ENCODE measurements at regions of chr12 and their contacts with region 1.

Region 1: DNA sequence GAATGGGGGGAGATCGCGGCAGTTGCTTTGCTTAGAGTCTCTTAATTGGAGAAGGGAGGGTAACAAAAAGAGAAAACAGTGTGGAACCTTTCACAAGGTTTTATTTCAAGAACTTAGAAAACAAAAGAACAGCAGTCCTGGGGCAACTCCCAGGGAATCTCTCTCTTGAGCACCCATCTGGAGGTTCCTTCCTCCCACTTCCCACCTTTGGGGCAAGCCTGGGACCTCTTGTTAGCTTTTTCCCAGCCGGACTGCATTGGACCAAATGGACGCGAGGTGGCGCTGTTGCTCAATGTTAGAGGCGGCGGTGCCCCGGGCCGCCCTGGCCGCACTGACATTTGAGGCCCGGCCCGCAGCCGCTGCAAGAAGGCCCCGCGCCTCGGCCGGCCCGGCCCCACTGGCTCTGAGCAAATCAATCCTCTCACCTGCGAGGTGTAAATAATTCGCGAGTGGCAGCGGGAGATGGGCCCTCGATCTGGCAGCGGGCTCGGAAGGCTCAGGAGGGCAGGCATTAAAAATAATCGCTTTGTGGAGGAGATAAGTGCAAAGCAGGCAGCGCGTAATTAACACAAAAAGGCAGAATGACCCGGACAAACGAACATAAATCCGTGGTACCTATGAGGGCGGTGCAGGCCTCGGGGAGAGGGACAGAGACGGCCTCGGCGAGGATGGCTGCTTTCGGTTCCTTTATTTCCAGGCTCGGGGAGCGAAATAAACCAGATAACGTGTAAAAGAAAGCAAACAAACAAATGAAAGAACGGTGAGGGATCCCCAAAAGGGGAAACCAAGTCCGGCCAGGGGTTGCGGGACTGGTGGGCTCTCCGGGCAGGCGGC is 2.7 kb upstream of the HOXC8 start:
- DNase-seq: peak; percentile 65
- H3K4me3 ChIP-seq: no peak overlapping the region
- H3K27ac ChIP-seq: no peak overlapping the region
- H3K27me3 ChIP-seq: peaks cover 92% of the 10 kb centered on the region
- CTCF ChIP-seq: peak; percentile 84

Region 2: GRCh38 chr12:53791735-53792326 is 214.2 kb before region 1 on chr12:
- in situ Hi-C with region 1: no loop called
- DNase-seq: no peak
- H3K4me3 ChIP-seq: no peak overlapping the region
- H3K27ac ChIP-seq: no peak overlapping the region
- H3K27me3 ChIP-seq: peaks cover 23% of the 10 kb centered on the region
- CTCF ChIP-seq: peak; percentile 70

Region 3: GRCh38 chr12:54214553-54215406 is 208.7 kb after region 1 on chr12:
- in situ Hi-C with region 1: loop called (anchors 25 kb)
- DNase-seq: peak; percentile 71
- H3K4me3 ChIP-seq: peak overlapping the region; percentile 24
- H3K27ac ChIP-seq: no peak overlapping the region
- H3K27me3 ChIP-seq: no peaks in the 10 kb centered on the region
- CTCF ChIP-seq: peak; percentile 99

Measured in brain microvascular endothelial cell (primary cell).